ENCODE measurements at regions of chr11 and their contacts with region 1.

Region 1: DNA sequence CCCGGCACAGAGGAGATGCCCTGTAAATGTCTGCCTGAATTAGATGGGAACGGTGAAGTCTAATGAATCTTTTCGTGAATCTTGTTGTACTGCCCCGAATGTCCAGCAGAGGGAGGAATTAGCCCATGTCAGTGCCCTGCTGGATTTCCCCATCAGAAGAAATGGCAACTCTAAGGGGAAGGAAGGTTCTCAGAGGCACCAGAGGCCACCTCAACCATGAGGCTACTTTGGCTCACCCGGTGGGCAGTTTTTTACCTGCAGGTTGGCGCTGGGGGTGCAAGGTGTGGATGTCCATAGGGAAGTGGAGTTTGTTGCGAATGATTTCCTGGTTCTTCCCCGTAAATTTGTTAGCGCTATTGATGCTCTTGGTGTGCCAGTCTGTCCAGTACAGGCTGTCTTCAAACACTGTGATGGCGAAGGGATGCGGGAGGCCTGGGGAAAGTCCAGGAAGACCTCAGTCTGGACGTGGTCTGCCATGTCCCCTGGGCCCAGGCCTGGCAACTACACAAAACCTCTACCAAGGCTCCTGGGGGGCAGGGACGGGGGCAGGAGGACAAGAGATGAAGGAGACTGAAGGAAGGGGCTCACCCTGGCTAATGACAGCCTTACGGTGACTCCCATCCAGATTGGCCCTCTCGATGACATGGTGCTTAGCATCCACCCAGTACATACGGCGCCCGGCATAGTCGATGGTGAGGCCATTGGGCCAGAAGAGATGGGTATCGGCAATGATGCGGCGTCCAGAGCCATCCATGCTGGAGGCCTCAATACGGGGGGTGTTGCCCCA is 28.5 kb downstream of the LRP4 start:
- DNase-seq: peak; percentile 53 to 66
- H3K4me3 ChIP-seq: no peak overlapping the region
- H3K27ac ChIP-seq: no peak overlapping the region
- H3K4me1 ChIP-seq: no peaks in the 10 kb centered on the region
- H3K27me3 ChIP-seq: no peaks in the 10 kb centered on the region
- CTCF ChIP-seq: peak; percentile 97

Region 2: DNA sequence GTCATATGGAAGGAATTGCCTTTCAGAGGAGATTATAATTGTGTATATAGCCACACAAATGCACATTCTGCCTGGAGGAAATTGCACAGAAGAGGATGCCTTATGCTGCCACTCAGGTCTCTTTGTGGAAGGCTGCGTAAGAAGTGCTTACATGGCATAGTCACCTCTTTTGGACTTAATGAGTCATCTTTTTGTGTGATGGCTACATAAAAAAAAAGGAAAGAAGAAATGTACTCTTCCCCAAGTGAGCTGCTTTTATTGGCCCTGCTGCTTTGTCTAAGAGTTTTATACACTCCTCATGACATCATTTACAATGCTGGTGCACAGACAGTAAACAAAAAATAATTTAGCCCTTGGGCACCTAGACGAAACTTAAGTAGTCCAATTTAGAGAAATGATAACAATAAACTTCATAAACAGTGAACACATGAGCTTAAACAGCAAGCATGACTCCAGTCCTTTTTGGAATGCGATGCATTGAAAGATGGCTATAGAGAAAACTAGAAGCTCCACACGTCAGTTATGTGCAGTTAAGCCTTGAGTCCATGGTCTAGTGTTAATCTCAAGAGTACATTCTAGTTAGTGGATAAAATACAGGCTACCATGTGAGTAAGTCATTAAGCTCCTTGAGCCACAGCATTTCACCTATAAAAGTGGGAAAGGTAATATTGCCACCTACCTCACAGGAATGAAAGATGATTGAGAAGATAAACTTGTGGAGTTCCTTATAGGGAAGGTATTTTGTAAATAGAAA is 58.7 kb after region 1 on chr11:
- CTCF ChIA-PET with region 1: interaction called, 10 read pairs
- POLR2A ChIA-PET with region 1: no interaction called
- intact Hi-C with region 1: no loop called
- DNase-seq: peak in 1 of 2 experiments; percentile 51
- H3K4me3 ChIP-seq: no peak overlapping the region
- H3K27ac ChIP-seq: no peak overlapping the region
- H3K4me1 ChIP-seq: 0 out of 2 replicates have a peak, but pooled peaks cover 5% of the 10 kb centered on the region
- H3K27me3 ChIP-seq: no peaks in the 10 kb centered on the region
- CTCF ChIP-seq: no peak

Region 3: GRCh38 chr11:47152953-47153950 is 263.4 kb after region 1 on chr11:
- CTCF ChIA-PET with region 1: interaction called, 6 read pairs
- POLR2A ChIA-PET with region 1: no interaction called
- intact Hi-C with region 1: loop called (anchors 1 kb)
- DNase-seq: peak; percentile 66 to 79
- H3K4me3 ChIP-seq: no peak overlapping the region
- H3K27ac ChIP-seq: no peak overlapping the region
- H3K4me1 ChIP-seq: no peaks in the 10 kb centered on the region
- H3K27me3 ChIP-seq: no peaks in the 10 kb centered on the region
- CTCF ChIP-seq: peak; percentile 99

Region 4: DNA sequence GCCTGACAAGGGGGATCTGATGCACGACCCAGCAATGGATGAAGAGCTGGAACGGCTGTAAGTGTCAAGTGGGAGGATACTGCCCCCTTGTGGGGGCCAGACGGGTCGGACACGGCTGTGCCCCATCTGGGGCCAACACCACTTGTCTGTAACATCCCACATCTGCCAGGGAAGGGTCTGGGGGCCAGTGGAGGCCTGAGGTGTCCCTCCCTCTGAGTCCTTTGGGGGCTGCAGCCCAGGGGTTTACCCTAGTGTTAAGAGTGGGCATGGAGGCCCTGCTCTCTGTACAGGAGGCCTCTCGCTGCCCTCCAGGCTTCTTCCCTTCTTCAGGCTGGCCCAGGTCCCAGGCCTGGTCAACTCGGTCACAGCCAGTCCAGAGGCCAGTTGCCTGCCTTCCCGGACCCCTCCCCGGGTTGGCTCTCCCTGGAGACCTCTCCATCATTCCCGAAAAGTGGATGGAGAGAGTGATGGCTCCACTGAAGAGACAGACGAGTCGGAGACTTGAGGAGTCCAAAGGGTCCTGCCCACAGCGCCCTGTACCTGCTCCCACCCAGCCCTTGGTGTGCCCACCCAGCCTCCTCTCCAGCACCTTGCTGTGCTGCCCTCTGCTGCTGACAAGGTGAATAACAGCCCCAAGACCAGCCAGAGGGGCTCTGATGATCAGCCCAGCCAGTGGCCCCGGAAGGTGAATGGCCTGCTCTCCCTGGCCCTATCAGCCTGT is 271.4 kb after region 1 on chr11:
- CTCF ChIA-PET with region 1: no interaction called
- POLR2A ChIA-PET with region 1: no interaction called
- intact Hi-C with region 1: loop called (anchors 1 kb)
- DNase-seq: peak; percentile 51 to 64
- H3K4me3 ChIP-seq: no peak overlapping the region
- H3K27ac ChIP-seq: no peak overlapping the region
- H3K4me1 ChIP-seq: no peaks in the 10 kb centered on the region
- H3K27me3 ChIP-seq: no peaks in the 10 kb centered on the region
- CTCF ChIP-seq: peak; percentile 75

Measured in PC-9 (cell line).